Caco-2 (cell line): ENCODE measurements at regions of chr1 and their contacts with region 1.

Region 1: DNA sequence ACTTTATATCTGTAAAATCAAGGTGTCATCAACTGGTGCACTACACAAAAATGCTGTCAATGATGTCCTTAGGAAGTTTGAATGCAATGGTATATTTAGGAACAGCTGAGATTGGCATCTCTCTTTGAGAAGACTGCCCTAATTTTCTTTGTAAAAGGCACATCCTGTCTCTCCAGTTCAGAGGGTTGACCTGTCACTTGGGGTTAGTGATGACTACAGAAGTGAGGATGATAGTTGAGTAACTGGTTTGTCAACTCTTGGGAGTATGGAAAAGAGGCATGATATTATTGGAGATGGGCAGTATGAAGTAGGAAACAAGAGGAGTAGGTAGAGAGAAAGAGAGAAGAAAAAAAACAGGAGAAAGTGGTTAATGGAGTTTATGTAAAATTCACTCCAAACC is 40.4 kb upstream of the PIGC start:
- DNase-seq: peak in 1 of 2 experiments; percentile 21
- H3K4me3 ChIP-seq: no peak overlapping the region
- H3K4me3 Mint-ChIP-seq: peak overlapping the region; percentile 8
- H3K27ac Mint-ChIP-seq: peak overlapping the region; percentile 30
- H3K4me1 ChIP-seq: peaks cover 64% of the 10 kb centered on the region
- H3K4me1 Mint-ChIP-seq: peaks cover 30% of the 10 kb centered on the region
- H3K27me3 ChIP-seq: no peaks in the 10 kb centered on the region
- H3K27me3 Mint-ChIP-seq: no peaks in the 10 kb centered on the region
- CTCF ChIP-seq: no peak

Region 2: DNA sequence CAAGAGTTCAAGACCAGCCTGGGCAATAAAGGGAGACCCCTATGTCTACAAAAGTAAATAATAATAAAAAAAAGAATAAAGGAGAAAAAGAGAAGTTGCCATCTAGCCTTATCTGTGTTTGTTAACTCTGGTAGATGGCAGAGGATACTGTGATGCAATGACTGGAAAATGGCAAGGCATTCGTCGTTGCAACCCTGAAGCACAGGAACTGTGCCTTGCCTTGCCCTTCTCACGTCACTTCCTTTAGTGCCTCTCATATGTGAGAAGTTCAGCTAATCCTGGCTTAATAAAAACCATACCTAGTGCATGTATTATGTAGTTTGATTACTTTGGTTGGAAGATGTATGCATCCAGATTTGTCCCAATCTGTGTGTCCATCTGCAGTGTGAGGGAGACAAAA is 14.5 kb before region 1 on chr1:
- CTCF ChIA-PET with region 1: no interaction called
- POLR2A ChIA-PET with region 1: no interaction called
- intact Hi-C with region 1: loop called (anchors 2 kb)
- DNase-seq: peak; percentile 65 to 73
- H3K4me3 ChIP-seq: no peak overlapping the region
- H3K4me3 Mint-ChIP-seq: peak overlapping the region; percentile 62
- H3K27ac Mint-ChIP-seq: peak overlapping the region; percentile 94
- H3K4me1 ChIP-seq: peaks cover 74% of the 10 kb centered on the region
- H3K4me1 Mint-ChIP-seq: peaks cover 55% of the 10 kb centered on the region
- H3K27me3 ChIP-seq: no peaks in the 10 kb centered on the region
- H3K27me3 Mint-ChIP-seq: no peaks in the 10 kb centered on the region
- CTCF ChIP-seq: no peak

Region 3: GRCh38 chr1:172499636-172500141 is 15.5 kb after region 1 on chr1:
- CTCF ChIA-PET with region 1: no interaction called
- POLR2A ChIA-PET with region 1: no interaction called
- intact Hi-C with region 1: loop called (anchors 2 kb)
- DNase-seq: peak; percentile 69 to 86
- H3K4me3 ChIP-seq: no peak overlapping the region
- H3K4me3 Mint-ChIP-seq: no peak overlapping the region
- H3K27ac Mint-ChIP-seq: peak overlapping the region; percentile 33
- H3K4me1 ChIP-seq: peaks cover 44% of the 10 kb centered on the region
- H3K4me1 Mint-ChIP-seq: peaks cover 22% of the 10 kb centered on the region
- H3K27me3 ChIP-seq: no peaks in the 10 kb centered on the region
- H3K27me3 Mint-ChIP-seq: no peaks in the 10 kb centered on the region
- CTCF ChIP-seq: no peak